Mammary epithelial cell (primary cell): ENCODE measurements at regions of chr9 and their contacts with region 1.

Region 1: DNA sequence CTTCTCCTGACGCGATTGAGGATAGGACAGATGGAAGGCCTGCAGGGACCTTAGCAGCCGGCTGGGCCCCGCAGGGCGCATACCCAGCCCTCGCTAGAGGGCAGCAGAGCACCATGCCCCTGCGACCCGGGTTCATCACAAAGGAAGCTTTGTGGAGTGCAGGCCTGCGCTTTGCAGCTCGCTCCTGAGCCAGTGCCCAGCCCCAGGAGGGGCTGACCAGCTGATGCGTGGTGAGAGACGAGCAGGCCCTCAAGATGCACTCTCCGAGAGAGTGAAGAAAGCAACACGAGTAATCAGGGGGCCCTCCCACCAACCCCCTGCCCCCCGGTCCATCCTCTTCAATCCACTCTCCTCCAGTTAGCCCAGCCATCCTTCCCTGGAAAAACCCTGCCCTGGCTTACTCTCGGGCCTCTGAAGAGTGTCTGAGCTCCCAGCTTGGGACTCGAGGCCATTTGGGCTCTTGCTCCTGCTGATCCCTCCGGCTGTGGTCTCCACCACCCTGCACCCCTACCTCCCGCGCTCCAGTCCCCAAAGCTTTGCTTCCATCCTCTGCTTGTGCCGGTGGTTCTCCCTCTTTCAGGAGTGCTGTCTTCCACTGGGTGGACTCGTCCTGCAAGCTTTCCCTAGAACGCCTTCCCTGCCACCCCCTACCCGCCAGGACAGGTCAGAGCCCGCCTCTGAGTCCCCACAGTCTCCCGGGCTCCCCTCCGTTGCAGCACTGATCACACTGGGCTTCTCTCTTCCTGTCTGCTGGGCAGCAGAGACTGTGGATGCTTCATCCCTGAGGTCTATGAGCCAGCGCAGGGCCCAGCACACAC is 9.1 kb upstream of the KIF12 start:
- DNase-seq: peak; percentile 70
- H3K4me3 ChIP-seq: no peak overlapping the region
- H3K27ac ChIP-seq: no peak overlapping the region
- H3K4me1 ChIP-seq: no peaks in the 10 kb centered on the region
- H3K27me3 ChIP-seq: no peaks in the 10 kb centered on the region
- CTCF ChIP-seq: peak; percentile 97 to 100

Region 2: GRCh38 chr9:114082017-114082762 is 26.0 kb before region 1 on chr9:
- CTCF ChIA-PET with region 1: interaction called, 8 read pairs
- dilution Hi-C with region 1: no loop called
- in situ Hi-C with region 1: no loop called
- intact Hi-C with region 1: loop called (anchors 2 kb)
- DNase-seq: peak; percentile 72
- H3K4me3 ChIP-seq: no peak overlapping the region
- H3K27ac ChIP-seq: no peak overlapping the region
- H3K4me1 ChIP-seq: no peaks in the 10 kb centered on the region
- H3K27me3 ChIP-seq: no peaks in the 10 kb centered on the region
- CTCF ChIP-seq: peak; percentile 91 to 92

Region 3: GRCh38 chr9:114203410-114204140 is 95.3 kb after region 1 on chr9:
- CTCF ChIA-PET with region 1: no interaction called
- dilution Hi-C with region 1: loop called (anchors 5 kb)
- in situ Hi-C with region 1: no loop called
- intact Hi-C with region 1: no loop called
- DNase-seq: peak; percentile 65
- H3K4me3 ChIP-seq: no peak overlapping the region
- H3K27ac ChIP-seq: no peak overlapping the region
- H3K4me1 ChIP-seq: peaks cover 5% of the 10 kb centered on the region
- H3K27me3 ChIP-seq: no peaks in the 10 kb centered on the region
- CTCF ChIP-seq: no peak

Region 4: GRCh38 chr9:114304416-114305188 is 196.4 kb after region 1 on chr9:
- CTCF ChIA-PET with region 1: no interaction called
- dilution Hi-C with region 1: no loop called
- in situ Hi-C with region 1: no loop called
- intact Hi-C with region 1: loop called (anchors 1 kb)
- DNase-seq: no peak
- H3K4me3 ChIP-seq: no peak overlapping the region
- H3K27ac ChIP-seq: no peak overlapping the region
- H3K4me1 ChIP-seq: no peaks in the 10 kb centered on the region
- H3K27me3 ChIP-seq: no peaks in the 10 kb centered on the region
- CTCF ChIP-seq: no peak